Cardiac septum (tissue), 1 donor: ENCODE measurements at regions of chr20 and their contacts with region 1.

Region 1: GRCh38 chr20:20083807-20084206 is 31.5 kb downstream of the CFAP61 start:
- DNase-seq: no peak

Region 2: DNA sequence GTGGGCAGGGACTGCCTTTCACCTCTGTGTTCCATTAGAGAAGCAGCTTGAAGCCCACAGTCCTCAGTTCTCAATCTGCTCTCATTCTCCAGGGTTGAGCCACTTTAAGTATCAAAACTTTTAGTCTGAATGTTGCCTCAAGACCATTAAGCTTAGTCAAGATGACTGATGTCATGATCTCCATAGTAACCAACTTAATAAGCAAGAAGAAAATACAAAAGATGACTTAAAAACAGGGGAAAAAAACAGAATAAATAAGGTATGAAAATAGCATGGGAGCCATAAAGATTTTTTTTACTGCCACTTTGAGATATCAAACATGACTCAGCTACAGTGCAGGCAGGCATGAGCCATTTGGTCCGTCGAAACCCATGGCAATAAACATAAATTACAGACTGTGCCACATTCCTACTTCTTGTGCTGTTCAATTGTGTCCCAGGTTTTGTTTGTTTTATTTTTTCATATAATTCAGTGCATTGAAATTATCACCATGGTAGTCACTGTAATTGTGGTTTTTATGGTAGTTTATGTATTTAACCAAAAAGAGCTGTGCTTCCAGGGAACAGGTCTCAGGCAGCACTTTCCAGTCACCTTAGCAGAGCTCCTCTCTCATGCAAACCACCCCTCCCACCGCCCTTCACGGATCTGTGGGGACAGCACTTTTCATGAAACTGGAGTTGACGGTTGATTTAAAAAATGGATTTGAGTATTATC is 127.6 kb after region 1 on chr20:
- intact Hi-C with region 1: loop called (anchors 5 kb)
- DNase-seq: no peak

Region 3: DNA sequence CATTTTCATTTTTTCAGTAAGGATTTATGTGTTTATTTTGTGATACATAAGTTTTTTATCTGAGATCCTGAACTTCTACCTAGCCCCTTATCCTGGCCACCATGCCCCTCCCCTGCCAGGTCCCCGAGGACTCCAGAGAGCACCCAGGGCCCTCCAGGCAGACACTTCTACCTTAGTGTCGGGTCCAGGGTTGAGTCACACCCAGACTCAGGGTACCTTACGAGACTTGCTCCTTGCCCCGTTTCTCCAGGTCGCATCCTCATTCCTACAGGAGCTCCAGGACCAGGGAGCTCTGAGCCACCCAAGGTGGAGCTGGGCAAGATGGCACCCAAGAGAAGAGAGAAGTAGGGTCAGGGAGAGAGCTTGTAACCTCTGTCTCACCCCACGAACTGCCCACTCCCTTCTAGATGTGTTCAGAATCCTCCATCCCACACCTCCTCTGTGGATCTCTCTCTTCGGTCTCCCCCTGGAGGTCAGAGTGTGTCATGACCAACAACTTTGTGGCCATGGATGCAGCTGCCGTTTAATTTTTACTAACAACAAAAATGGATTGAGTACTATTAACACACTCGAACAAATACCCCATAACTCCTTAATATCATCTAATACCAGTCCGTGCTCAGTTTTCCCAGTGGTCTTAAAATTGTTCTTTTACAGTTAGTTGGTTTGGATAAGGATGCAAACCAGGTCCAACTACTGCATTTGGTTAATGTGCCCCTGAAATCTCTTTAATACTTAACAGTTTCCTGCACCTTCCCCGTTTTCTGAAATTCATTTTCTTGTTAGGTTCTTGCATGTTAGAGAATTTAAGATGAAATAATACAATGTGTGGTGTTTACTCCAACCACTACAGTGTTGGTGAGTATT is 153.5 kb after region 1 on chr20:
- intact Hi-C with region 1: loop called (anchors 1 kb)
- DNase-seq: no peak

Region 4: DNA sequence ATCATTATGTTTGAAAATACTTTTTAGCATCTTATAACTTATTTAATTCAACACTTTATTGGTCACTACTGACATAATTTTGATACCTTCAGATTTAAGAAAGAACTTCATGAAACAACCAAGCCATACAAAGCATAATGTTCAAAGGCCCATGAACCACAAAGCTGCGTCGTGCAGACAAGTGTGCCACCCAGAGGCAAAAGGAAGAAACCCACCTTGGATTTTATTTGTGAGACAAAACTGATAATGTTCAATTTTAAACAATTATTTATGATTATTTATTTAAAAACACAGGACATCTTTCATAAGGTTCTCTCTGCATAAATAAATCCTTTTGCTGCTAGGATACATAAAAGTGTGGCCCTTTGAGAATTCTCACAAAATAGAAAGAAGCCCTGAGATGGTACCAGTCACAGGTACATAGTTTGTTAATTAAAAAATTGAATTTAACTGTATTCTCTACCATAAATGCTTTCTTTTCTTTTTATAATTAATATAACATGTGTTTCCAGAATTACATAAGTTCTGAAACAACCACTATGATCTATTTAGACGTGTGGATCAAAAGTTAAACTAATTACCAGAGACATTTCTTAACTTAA is 484.9 kb after region 1 on chr20:
- intact Hi-C with region 1: loop called (anchors 5 kb)
- DNase-seq: no peak